Common myeloid progenitor, CD34-positive (primary cell): ENCODE measurements at regions of chr17 and their contacts with region 1.

Region 1: DNA sequence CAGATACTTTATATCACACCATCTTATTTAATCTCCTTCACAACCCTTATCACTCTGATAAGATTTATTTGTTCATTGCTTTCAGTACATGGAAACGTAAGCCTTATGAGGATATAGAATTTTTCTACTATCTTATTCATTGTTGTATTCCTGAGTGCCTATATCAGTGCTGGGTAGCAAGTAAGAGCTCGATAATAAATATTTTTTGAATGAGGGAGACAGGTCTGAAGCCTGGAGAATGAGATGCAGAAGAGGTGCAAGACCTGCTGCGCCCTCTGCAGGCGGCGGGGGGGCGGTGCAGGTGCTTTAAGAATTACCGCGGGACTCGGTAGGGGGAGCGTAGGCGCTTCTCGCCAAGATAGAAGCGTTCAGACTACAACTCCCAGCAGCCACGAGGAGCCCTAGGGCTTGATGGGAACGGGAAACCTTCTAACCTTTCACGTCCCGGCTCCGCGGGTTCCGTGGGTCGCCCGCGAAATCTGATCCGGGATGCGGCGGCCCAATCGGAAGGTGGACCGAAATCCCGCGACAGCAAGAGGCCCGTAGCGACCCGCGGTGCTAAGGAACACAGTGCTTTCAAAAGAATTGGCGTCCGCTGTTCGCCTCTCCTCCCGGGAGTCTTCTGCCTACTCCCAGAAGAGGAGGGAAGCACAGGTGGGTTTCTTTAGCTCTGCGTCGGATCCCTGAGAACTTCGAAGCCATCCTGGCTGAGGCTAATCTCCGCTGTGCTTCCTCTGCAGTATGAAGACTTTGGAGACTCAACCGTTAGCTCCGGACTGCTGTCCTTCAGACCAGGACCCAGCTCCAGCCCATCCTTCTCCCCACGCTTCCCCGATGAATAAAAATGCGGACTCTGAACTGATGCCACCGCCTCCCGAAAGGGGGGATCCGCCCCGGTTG is at the start of gene WRAP53:
- DNase-seq: peak; percentile 97 to 98 (median 98)
- H3K4me3 ChIP-seq: peak within 1 kb of the TSS; percentile 94 to 100 (median 100)
- H3K27ac ChIP-seq: peak within 1 kb of the TSS; percentile 100
- H3K4me1 ChIP-seq: peaks cover 10 to 42% (median 34%) of the 10 kb centered on the region in 4 experiments
- H3K27me3 ChIP-seq: no peaks in the 10 kb centered on the region

Region 2: GRCh38 chr17:7538891-7539290 is 149.3 kb before region 1 on chr17:
- CTCF ChIA-PET with region 1: no interaction called
- POLR2A ChIA-PET with region 1: no interaction called
- DNase-seq: no peak
- H3K4me3 ChIP-seq: no peak overlapping the region
- H3K27ac ChIP-seq: no peak overlapping the region
- H3K4me1 ChIP-seq: no peaks in the 10 kb centered on the region
- H3K27me3 ChIP-seq: no peaks in the 10 kb centered on the region

Region 3: GRCh38 chr17:7614422-7615264 is 73.5 kb before region 1 on chr17 and contains the start of gene FXR2:
- CTCF ChIA-PET with region 1: interaction called, 6 read pairs
- POLR2A ChIA-PET with region 1: interaction called, 11 read pairs
- DNase-seq: peak; percentile 100
- H3K4me3 ChIP-seq: peak within 1 kb of the TSS; percentile 72 to 92 (median 75)
- H3K27ac ChIP-seq: peak within 1 kb of the TSS; percentile 27 to 87
- H3K4me1 ChIP-seq: peaks cover 9 to 28% (median 21%) of the 10 kb centered on the region in 4 experiments
- H3K27me3 ChIP-seq: no peaks in the 10 kb centered on the region

Region 4: DNA sequence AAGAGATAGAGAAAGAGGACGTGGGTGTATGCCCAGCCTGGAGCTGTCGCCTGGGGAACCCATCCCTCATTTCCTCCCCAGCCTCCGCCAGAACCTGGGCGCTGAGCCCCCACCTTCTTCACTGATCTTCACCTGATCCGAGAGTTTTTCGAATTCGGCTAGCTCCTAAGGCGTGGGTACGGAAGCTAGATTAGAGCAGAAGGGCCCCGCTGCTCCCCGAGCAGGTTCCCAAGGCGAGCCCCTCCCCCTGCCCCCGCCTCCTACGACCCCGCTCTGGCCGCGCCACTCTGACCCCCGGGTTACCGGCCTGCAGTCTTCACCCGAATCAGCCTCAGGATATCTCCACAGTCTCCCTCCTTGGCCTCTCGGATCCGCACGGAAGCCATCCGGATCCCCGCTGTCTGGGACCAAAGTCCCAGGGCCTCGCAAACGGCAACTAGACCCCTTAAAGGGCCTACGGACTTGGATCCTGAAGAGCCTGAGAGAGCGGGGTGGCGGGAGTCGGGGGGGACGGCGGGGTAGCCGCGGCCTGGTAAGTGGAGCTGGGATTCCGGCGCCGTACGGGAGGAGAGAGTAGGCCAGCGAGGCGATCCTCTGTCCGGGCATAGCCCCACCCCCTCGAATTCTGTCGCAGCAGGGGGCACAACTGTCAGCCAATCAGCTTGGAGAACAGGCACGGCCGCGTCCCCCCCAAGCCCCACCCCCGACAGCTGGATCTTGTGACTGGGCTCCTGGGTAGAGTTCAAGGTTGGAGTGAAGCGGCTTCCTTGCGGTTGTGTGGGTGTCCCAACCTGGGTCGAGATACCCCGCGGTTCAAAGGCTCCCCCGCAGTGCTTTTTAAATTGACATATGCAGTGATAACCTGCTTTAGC is 60.7 kb before region 1 on chr17 and contains the start of gene SAT2:
- CTCF ChIA-PET with region 1: interaction called, 91 read pairs
- POLR2A ChIA-PET with region 1: interaction called, 8 read pairs
- DNase-seq: peak; percentile 91 to 95 (median 94)
- H3K4me3 ChIP-seq: peak within 1 kb of the TSS; percentile 52 to 89 (median 83)
- H3K27ac ChIP-seq: peak within 1 kb of the TSS; percentile 85 to 93
- H3K4me1 ChIP-seq: peaks cover 0 to 12% (median 10%) of the 10 kb centered on the region in 4 experiments
- H3K27me3 ChIP-seq: no peaks in the 10 kb centered on the region

Region 5: DNA sequence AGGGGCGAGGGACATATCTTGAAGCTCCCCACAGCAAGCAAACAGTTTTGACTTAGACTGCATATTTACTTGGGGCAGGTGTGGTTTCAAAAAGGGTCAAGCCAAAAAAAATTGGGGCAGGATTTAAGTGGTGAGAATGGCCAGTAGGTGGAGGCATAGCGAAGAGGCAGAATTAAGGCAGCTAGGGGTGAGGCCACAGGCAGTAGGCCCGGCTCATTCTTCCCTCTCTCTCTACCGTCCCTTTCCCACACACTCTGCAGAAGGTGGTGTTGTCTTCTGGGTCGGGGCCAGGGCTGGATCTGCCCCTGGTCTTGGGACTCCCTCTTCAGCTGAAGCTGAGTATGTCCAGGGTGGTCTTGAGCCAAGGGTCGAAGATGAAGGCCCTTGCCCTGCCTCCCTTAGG is 55.7 kb before region 1 on chr17:
- CTCF ChIA-PET with region 1: interaction called, 91 read pairs
- POLR2A ChIA-PET with region 1: interaction called, 8 read pairs
- DNase-seq: peak; percentile 74 to 80 (median 76)
- H3K4me3 ChIP-seq: no peak overlapping the region
- H3K27ac ChIP-seq: no peak overlapping the region
- H3K4me1 ChIP-seq: peaks cover 0 to 6% (median 1%) of the 10 kb centered on the region in 4 experiments
- H3K27me3 ChIP-seq: no peaks in the 10 kb centered on the region

Region 6: GRCh38 chr17:7673239-7673638 is 14.9 kb before region 1 on chr17:
- CTCF ChIA-PET with region 1: interaction called, 13 read pairs
- POLR2A ChIA-PET with region 1: no interaction called
- DNase-seq: peak; percentile 16 to 65 (median 40)
- H3K4me3 ChIP-seq: no peak overlapping the region
- H3K27ac ChIP-seq: no peak overlapping the region
- H3K4me1 ChIP-seq: no peaks in the 10 kb centered on the region
- H3K27me3 ChIP-seq: no peaks in the 10 kb centered on the region

Region 7: DNA sequence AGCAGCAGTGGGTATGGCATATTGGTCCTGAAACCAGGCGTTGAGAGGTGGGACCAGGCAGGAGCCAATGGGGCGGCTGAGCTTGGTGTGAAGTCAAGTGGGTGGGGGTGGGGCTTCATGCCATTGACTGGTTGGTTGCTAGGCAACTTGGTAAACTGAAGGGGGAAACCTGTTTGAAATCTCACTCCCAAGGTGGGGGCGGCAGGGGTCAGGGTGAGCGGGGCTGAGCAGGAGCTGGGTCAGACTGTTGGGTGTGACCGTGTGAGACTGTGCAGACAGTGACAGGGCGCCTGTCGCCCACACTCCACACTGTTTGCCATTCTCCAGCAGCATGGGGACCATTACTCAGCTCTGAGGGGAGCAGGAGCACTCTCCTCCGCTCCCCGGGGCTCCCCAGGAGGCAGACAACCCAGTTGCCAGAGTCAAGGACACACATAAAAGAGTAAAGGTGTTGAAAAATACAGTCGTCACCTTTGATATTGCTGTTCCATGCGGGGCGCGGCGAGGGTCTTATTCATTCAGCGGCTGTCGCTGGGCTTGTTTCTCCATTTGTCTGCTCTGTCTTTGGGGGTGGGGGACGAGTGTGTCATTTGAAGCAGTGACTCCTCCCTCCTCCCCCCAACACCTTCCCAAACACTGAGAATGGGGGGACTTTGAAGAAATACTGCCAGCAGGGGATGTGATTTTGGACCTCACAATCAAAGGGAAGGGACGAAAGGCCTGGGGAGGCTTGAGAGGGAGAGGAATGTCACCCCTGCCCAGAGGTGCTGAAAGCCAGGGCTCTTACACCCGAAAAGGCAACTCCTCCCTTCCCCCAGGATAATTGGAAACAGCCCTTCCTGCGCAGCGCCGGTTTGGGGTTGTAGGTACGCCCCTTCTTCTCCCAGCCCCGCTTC is 15.7 kb after region 1 on chr17:
- CTCF ChIA-PET with region 1: interaction called, 13 read pairs
- POLR2A ChIA-PET with region 1: interaction called, 6 read pairs
- DNase-seq: peak; percentile 43 to 78 (median 66)
- H3K4me3 ChIP-seq: peak overlapping the region in 1 of 7 experiments; percentile 5
- H3K27ac ChIP-seq: no peak overlapping the region
- H3K4me1 ChIP-seq: peaks cover 0 to 25% (median 12%) of the 10 kb centered on the region in 4 experiments
- H3K27me3 ChIP-seq: peaks cover 0 to 47% (median 27%) of the 10 kb centered on the region in 5 experiments

Region 8: DNA sequence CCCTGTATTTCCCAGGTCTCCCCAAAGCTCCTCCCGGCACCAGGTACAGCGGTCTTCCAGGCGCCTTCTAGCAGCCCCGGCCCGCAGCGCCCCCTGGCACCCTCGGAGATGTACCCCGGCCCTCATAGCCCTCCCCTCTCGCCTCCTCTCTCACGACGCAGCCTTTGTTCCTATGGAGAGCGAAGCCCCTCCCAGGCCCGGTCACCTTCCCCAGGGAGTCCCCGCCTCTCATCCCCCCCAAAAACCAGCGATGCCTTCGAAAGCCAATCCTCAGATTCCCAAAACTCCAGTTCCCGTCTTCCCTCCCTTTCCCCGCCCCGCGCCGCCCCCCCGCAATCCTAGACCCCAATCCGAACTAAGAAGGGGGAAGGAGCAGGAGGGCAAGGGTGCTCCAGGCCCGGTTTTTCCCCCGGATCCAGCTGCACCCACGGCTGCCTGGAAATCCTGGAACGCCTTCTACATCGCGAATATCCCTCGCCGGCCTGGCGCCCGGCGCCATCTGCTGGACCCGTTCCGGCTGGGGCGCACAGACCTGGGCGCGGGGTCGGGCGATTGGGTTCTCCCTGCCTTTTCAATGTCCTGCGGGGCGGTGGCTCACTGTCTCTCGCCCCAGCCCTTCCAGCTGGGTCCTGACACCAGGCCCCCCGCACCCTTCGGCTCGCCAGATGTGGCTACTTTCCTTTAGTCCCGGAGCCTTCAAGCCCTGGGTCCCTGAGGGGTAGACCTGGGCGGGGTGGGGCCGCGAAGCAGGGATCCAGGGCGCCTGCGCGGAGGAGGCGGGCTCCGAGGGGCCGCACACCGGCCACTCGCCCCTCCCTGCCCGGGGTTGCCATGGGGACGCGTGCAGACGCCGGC is 29.0 kb after region 1 on chr17 and contains the start of gene DNAH2:
- CTCF ChIA-PET with region 1: interaction called, 38 read pairs
- POLR2A ChIA-PET with region 1: interaction called, 4 read pairs
- DNase-seq: peak; percentile 63 to 84 (median 82)
- H3K4me3 ChIP-seq: peak within 1 kb of the TSS; percentile 40 to 79 (median 66)
- H3K27ac ChIP-seq: no peak within 1 kb of the TSS
- H3K4me1 ChIP-seq: peaks cover 0 to 39% (median 30%) of the 10 kb centered on the region in 4 experiments
- H3K27me3 ChIP-seq: peaks cover 0 to 12% (median 8%) of the 10 kb centered on the region in 5 experiments

Region 9: DNA sequence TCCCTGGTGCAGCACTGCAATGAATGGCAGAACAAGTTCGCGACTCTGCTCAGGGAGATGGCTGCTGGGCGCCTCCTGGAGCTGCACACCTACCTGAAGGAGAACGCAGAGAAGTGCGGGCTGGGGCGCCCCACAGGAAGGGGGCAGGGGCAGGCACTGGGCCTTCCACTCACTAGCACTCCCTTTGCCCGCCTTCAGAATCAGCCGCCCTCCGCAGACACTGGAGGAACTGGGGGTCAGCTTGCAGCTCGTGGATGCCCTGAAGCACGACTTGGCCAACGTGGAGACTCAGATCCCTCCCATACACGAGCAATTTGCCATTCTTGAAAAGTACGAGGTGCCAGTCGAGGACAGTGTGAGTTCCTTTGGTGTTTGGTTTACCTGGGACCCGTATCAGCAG is 75.8 kb after region 1 on chr17:
- CTCF ChIA-PET with region 1: no interaction called
- POLR2A ChIA-PET with region 1: no interaction called
- DNase-seq: no peak
- H3K4me3 ChIP-seq: no peak overlapping the region
- H3K27ac ChIP-seq: no peak overlapping the region
- H3K4me1 ChIP-seq: no peaks in the 10 kb centered on the region
- H3K27me3 ChIP-seq: no peaks in the 10 kb centered on the region